Activated CD4-positive, alpha-beta T cell treated with anti-CD3 and anti-CD28 coated beads for 36 hours (primary cell): ENCODE measurements at regions of chr20 and their contacts with region 1.

Region 1: DNA sequence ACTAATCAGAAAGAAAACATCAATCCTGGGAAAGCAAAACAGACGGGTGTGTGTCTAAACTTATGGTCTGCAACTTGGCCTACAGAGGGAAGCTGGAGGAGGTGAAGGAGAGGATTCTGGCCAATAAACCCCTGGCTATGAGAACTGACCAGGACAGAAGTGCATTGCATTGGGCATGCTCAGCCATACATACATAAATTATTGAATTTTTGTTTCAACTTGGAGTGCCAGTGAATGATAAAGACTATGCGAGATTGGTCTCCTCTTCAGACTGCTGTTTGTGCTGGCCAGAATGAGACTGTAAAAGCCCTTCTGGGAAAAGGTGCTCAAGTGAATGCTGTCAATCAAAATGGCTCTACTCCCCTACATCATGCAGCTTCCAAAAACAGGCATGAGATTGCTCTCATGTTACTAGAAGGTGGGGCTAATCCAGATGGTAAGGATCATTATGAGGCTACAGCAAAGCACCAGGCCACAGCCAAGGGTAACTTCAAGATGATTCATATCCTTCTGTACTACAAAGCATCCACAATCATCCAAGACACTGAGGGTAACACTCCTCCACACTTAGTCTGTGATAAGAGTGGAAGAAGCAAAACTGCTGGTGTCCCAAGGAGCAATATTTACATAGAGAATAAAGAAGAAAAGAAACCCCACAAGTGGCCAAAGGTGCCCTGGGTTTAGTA is 17.4 kb downstream of the ADNP start:
- DNase-seq: peak; percentile 59
- ATAC-seq: peak; percentile 94
- H3K4me3 Mint-ChIP-seq: no peak overlapping the region
- H3K27ac Mint-ChIP-seq: peak overlapping the region; percentile 81
- H3K4me1 Mint-ChIP-seq: peaks cover 82% of the 10 kb centered on the region
- H3K27me3 Mint-ChIP-seq: no peaks in the 10 kb centered on the region

Region 2: DNA sequence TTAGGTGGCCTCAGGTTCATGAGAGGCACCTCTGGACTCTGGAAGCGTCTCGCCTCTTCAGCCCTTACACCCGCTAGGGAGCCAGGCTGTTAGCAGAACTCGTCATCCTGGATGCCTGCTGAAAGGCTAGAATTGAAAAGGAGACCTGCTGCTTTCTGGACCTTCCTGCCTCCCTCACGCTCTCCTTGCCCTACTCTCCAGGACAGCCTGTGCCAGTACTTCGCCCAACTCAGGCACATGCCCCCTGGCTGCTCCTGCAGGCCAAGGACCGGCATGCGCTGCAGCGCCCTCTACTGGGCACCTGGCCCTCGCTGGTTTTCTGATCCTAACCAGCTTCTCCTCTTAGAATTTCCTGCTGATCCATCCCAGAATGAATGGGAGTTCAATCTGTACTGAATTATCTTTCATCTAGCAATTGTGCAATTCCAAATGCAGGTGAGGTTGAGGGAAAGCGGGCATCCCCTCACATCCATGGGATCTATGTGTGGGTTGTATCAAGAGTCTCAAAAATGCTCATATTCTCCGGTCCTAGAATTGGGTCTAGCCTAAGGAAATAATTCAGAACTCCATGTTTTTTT is 325.7 kb before region 1 on chr20:
- CTCF ChIA-PET with region 1: no interaction called
- POLR2A ChIA-PET with region 1: no interaction called
- intact Hi-C with region 1: no loop called
- DNase-seq: peak; percentile 89
- ATAC-seq: peak; percentile 75
- H3K4me3 Mint-ChIP-seq: no peak overlapping the region
- H3K27ac Mint-ChIP-seq: no peak overlapping the region
- H3K4me1 Mint-ChIP-seq: peaks cover 3% of the 10 kb centered on the region
- H3K27me3 Mint-ChIP-seq: no peaks in the 10 kb centered on the region

Region 3: DNA sequence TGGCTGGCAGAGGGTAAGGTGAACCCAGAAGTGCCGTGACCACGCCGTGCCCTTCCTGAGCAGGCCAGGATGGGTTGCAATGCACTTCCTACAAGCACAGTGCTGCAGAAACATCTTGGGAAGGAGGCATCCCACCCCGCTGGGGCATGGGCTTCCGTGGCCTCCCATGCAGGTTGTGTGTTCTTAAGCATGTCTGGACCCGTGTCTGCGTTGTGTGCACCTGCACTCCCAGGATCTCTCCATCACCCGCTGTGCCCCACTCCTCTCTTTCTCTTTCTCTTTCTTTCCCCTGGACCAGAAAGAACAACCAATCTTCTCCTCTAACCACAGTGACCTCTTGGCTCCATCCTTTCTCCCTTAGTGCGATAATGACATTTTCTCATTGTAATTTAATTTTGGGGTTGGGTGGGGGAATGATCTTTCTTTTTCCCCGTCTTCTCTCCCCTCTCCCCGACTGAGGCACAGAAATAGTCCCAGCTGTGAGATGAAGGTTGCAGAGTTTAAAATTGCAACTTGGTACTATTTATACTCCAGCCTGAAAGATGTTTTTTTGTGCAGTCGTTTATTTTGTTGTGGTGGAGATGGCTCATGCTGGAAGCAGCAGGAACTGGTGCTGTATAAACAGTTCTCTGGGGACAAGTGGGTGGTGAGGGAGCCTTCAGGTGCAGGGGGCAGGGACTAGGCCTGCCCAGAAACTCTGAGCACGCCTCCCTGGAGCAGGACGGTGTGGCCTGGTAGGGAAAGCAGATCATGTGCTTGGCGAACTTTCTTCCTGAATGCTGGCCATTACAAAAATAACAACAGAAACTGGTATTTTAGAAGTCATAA is 98.5 kb before region 1 on chr20:
- CTCF ChIA-PET with region 1: interaction called, 4 read pairs
- POLR2A ChIA-PET with region 1: no interaction called
- intact Hi-C with region 1: loop called (anchors 5 kb)
- DNase-seq: peak; percentile 57
- ATAC-seq: peak; percentile 60
- H3K4me3 Mint-ChIP-seq: peak overlapping the region; percentile 60
- H3K27ac Mint-ChIP-seq: peak overlapping the region; percentile 71
- H3K4me1 Mint-ChIP-seq: peaks cover 28% of the 10 kb centered on the region
- H3K27me3 Mint-ChIP-seq: no peaks in the 10 kb centered on the region

Region 4: DNA sequence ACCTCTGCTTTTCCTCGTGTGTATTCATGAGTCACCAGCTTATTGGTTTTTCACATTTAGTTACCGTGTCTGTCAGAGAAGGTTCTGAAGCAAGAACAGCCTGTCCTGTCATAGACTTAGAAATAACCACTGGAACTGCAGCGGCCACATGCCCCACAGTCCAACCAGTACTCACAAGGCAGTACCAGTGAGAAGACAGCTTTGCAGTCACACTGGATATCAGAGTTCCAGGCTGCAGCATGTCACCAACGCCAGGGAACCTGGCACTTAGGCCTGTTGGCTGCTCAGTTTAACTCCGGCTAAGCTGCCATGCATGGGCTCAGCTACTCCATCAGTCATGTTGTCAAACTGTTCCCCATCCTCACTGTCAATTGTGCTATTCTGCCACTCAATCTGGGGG is 22.7 kb before region 1 on chr20:
- CTCF ChIA-PET with region 1: interaction called, 6 read pairs
- POLR2A ChIA-PET with region 1: no interaction called
- intact Hi-C with region 1: loop called in 1 of 2 experiments (anchors 2 kb)
- DNase-seq: no peak
- ATAC-seq: no peak
- H3K4me3 Mint-ChIP-seq: no peak overlapping the region
- H3K27ac Mint-ChIP-seq: peak overlapping the region; percentile 44
- H3K4me1 Mint-ChIP-seq: peaks cover 38% of the 10 kb centered on the region
- H3K27me3 Mint-ChIP-seq: no peaks in the 10 kb centered on the region

Region 5: DNA sequence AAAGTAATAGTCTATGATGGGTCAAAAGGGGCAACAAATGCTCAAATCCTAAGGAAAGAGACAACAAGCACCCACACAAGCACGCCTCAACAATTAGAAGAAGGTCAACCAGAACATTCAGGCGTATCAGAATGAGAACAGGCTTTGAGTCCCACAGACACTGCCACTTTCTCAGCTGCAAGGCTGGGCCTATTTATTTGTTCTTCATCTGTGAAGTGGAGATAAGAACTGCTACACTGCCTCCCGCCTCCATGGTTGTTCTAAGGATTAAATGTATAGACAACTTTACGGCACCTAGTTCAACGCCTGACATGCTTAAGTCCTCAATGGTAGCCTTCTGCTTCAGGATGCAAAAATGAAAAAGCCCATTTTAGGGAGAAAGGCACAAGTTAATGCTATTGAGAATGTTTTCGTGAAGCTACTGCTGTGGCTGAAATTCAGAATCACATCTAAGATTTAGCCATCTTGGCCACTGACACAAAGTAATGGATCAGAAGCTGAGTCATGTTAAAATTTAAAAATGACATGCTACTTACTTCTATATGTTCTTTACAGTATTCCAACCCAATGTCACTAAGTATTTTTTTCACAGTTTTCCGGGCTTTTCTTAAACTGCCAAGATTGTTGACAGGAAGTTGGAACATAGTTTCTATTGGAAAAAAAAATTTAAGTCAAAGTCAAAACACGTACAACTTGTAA is 10.3 kb before region 1 on chr20:
- CTCF ChIA-PET with region 1: interaction called, 10 read pairs
- POLR2A ChIA-PET with region 1: interaction called, 5 read pairs
- intact Hi-C with region 1: no loop called
- DNase-seq: no peak
- ATAC-seq: no peak
- H3K4me3 Mint-ChIP-seq: no peak overlapping the region
- H3K27ac Mint-ChIP-seq: peak overlapping the region; percentile 37
- H3K4me1 Mint-ChIP-seq: peaks cover 25% of the 10 kb centered on the region
- H3K27me3 Mint-ChIP-seq: no peaks in the 10 kb centered on the region

Region 6: GRCh38 chr20:50929299-50930138 is 15.7 kb after region 1 on chr20:
- CTCF ChIA-PET with region 1: interaction called, 30 read pairs
- POLR2A ChIA-PET with region 1: interaction called, 4 read pairs
- intact Hi-C with region 1: loop called (anchors 1 to 2 kb)
- DNase-seq: peak; percentile 98
- ATAC-seq: peak; percentile 80
- H3K4me3 Mint-ChIP-seq: peak overlapping the region; percentile 92
- H3K27ac Mint-ChIP-seq: peak overlapping the region; percentile 95
- H3K4me1 Mint-ChIP-seq: peaks cover 55% of the 10 kb centered on the region
- H3K27me3 Mint-ChIP-seq: no peaks in the 10 kb centered on the region